CD8-positive, alpha-beta memory T cell (primary cell): ENCODE measurements at regions of chr1 and their contacts with region 1.

Region 1: DNA sequence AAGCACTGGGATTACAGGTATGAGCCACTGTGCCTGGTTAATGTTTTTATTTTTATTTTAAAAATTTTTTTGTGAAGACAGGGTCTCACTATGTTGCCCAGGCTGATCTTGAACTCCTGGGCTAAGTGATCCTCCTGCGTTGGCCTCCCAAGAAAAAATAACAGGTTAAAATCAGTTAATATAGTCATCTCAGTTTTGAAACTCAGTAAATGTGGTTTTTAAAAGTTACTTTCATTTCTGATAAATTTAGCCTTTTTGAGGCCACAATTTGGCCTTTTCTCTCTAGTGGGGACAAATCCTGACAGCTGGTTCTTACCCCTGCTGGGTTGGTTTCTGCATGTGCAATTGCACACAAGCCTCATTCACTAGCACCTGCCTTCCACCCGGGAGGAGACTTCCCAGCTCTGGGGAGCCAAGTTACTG is 13.3 kb downstream of the PMF1 start:
- DNase-seq: no peak
- H3K4me3 ChIP-seq: no peak overlapping the region
- H3K4me3 Mint-ChIP-seq: no peak overlapping the region
- H3K27ac ChIP-seq: no peak overlapping the region
- H3K27ac Mint-ChIP-seq: peak overlapping the region in 4 of 8 donors; percentile 14 to 78 (median 60)
- H3K4me1 ChIP-seq: no peaks in the 10 kb centered on the region
- H3K4me1 Mint-ChIP-seq: peaks cover 26 to 40% (median 31%) of the 10 kb centered on the region in 3 donors
- H3K27me3 ChIP-seq: no peaks in the 10 kb centered on the region
- H3K27me3 Mint-ChIP-seq: no peaks in the 10 kb centered on the region

Region 2: GRCh38 chr1:155622191-155622590 is 603.9 kb before region 1 on chr1:
- CTCF ChIA-PET with region 1: no interaction called
- POLR2A ChIA-PET with region 1: no interaction called
- DNase-seq: no peak
- H3K4me3 ChIP-seq: no peak overlapping the region
- H3K4me3 Mint-ChIP-seq: no peak overlapping the region
- H3K27ac ChIP-seq: no peak overlapping the region
- H3K27ac Mint-ChIP-seq: peak overlapping the region in 1 of 8 donors; percentile 14
- H3K4me1 ChIP-seq: no peaks in the 10 kb centered on the region
- H3K4me1 Mint-ChIP-seq: no peaks in the 10 kb centered on the region
- H3K27me3 ChIP-seq: no peaks in the 10 kb centered on the region
- H3K27me3 Mint-ChIP-seq: no peaks in the 10 kb centered on the region

Region 3: GRCh38 chr1:156096640-156097391 is 129.3 kb before region 1 on chr1:
- CTCF ChIA-PET with region 1: interaction called, 88 read pairs
- POLR2A ChIA-PET with region 1: no interaction called
- DNase-seq: peak; percentile 77 to 94 (median 87)
- H3K4me3 ChIP-seq: no peak overlapping the region
- H3K4me3 Mint-ChIP-seq: peak overlapping the region; percentile 23 to 91 (median 64)
- H3K27ac ChIP-seq: peak overlapping the region; percentile 68
- H3K27ac Mint-ChIP-seq: peak overlapping the region; percentile 93 to 100 (median 99)
- H3K4me1 ChIP-seq: peaks cover 22% of the 10 kb centered on the region
- H3K4me1 Mint-ChIP-seq: peaks cover 32 to 46% (median 37%) of the 10 kb centered on the region in 3 donors
- H3K27me3 ChIP-seq: no peaks in the 10 kb centered on the region
- H3K27me3 Mint-ChIP-seq: peaks cover 0 to 5% of the 10 kb centered on the region in 2 donors

Region 4: GRCh38 chr1:156129706-156130581 is 96.2 kb before region 1 on chr1:
- CTCF ChIA-PET with region 1: interaction called, 18 read pairs
- POLR2A ChIA-PET with region 1: no interaction called
- DNase-seq: peak; percentile 57 to 77 (median 71)
- H3K4me3 ChIP-seq: no peak overlapping the region
- H3K4me3 Mint-ChIP-seq: peak overlapping the region in 3 of 7 donors; percentile 48 to 72 (median 59)
- H3K27ac ChIP-seq: no peak overlapping the region
- H3K27ac Mint-ChIP-seq: peak overlapping the region in 7 of 8 donors; percentile 68 to 97 (median 90)
- H3K4me1 ChIP-seq: peaks cover 55% of the 10 kb centered on the region
- H3K4me1 Mint-ChIP-seq: peaks cover 42 to 54% (median 53%) of the 10 kb centered on the region in 3 donors
- H3K27me3 ChIP-seq: no peaks in the 10 kb centered on the region
- H3K27me3 Mint-ChIP-seq: peaks cover 0 to 3% of the 10 kb centered on the region in 2 donors

Region 5: DNA sequence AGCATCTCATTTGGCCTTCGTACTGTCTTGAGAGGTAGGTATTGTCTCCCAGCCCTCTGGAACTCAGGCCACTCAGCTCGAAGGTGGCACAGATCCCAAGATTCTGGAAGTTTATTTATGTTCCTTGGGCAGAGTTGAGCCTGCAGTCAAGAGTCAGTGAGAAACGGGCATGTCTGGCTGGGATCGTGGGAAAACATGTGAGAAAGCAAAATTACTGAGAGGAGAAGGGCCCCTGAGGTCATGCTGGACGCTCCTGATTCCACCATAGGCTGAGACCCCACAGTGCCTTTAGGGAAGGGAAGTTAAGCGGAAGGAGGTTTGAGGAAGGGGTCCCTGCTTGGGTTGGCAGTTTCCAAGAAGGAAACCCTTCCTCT is 85.3 kb before region 1 on chr1:
- CTCF ChIA-PET with region 1: interaction called, 50 read pairs
- POLR2A ChIA-PET with region 1: no interaction called
- DNase-seq: no peak
- H3K4me3 ChIP-seq: no peak overlapping the region
- H3K4me3 Mint-ChIP-seq: peak overlapping the region in 1 of 7 donors; percentile 59
- H3K27ac ChIP-seq: no peak overlapping the region
- H3K27ac Mint-ChIP-seq: peak overlapping the region in 3 of 8 donors; percentile 21 to 58 (median 53)
- H3K4me1 ChIP-seq: no peaks in the 10 kb centered on the region
- H3K4me1 Mint-ChIP-seq: peaks cover 1 to 4% (median 4%) of the 10 kb centered on the region in 3 donors
- H3K27me3 ChIP-seq: no peaks in the 10 kb centered on the region
- H3K27me3 Mint-ChIP-seq: no peaks in the 10 kb centered on the region

Region 6: GRCh38 chr1:156146020-156146768 is 79.9 kb before region 1 on chr1:
- CTCF ChIA-PET with region 1: interaction called, 50 read pairs
- POLR2A ChIA-PET with region 1: no interaction called
- DNase-seq: peak in 3 of 5 donors; percentile 56 to 70 (median 65)
- H3K4me3 ChIP-seq: peak overlapping the region; percentile 44
- H3K4me3 Mint-ChIP-seq: peak overlapping the region in 6 of 7 donors; percentile 0 to 77 (median 66)
- H3K27ac ChIP-seq: no peak overlapping the region
- H3K27ac Mint-ChIP-seq: peak overlapping the region in 6 of 8 donors; percentile 24 to 91 (median 80)
- H3K4me1 ChIP-seq: peaks cover 8% of the 10 kb centered on the region
- H3K4me1 Mint-ChIP-seq: peaks cover 14 to 20% (median 18%) of the 10 kb centered on the region in 3 donors
- H3K27me3 ChIP-seq: no peaks in the 10 kb centered on the region
- H3K27me3 Mint-ChIP-seq: peaks cover 0 to 9% of the 10 kb centered on the region in 2 donors

Region 7: GRCh38 chr1:156154317-156154749 is 71.8 kb before region 1 on chr1:
- CTCF ChIA-PET with region 1: interaction called, 13 read pairs
- POLR2A ChIA-PET with region 1: no interaction called
- DNase-seq: peak in 3 of 5 donors; percentile 39 to 59 (median 43)
- H3K4me3 ChIP-seq: no peak overlapping the region
- H3K4me3 Mint-ChIP-seq: peak overlapping the region; percentile 74 to 90 (median 78)
- H3K27ac ChIP-seq: no peak overlapping the region
- H3K27ac Mint-ChIP-seq: peak overlapping the region; percentile 37 to 94 (median 86)
- H3K4me1 ChIP-seq: no peaks in the 10 kb centered on the region
- H3K4me1 Mint-ChIP-seq: peaks cover 39 to 40% (median 40%) of the 10 kb centered on the region in 3 donors
- H3K27me3 ChIP-seq: no peaks in the 10 kb centered on the region
- H3K27me3 Mint-ChIP-seq: peaks cover 0 to 7% of the 10 kb centered on the region in 2 donors

Region 8: GRCh38 chr1:156212833-156213643 is 13.1 kb before region 1 on chr1 and contains the start of gene PMF1:
- CTCF ChIA-PET with region 1: interaction called, 27 read pairs
- POLR2A ChIA-PET with region 1: interaction called, 7 read pairs
- DNase-seq: peak; percentile 93 to 97 (median 94)
- H3K4me3 ChIP-seq: peak within 1 kb of the TSS; percentile 78
- H3K4me3 Mint-ChIP-seq: peak within 1 kb of the TSS; percentile 90 to 99 (median 97)
- H3K27ac ChIP-seq: peak within 1 kb of the TSS; percentile 93
- H3K27ac Mint-ChIP-seq: peak within 1 kb of the TSS; percentile 98 to 100 (median 99)
- H3K4me1 ChIP-seq: peaks cover 33% of the 10 kb centered on the region
- H3K4me1 Mint-ChIP-seq: peaks cover 31 to 47% (median 43%) of the 10 kb centered on the region in 3 donors
- H3K27me3 ChIP-seq: no peaks in the 10 kb centered on the region
- H3K27me3 Mint-ChIP-seq: no peaks in the 10 kb centered on the region
- total RNA-seq, gene PMF1: 85.9 to 88.3 TPM

Region 9: GRCh38 chr1:156262461-156263287 is 36.5 kb after region 1 on chr1:
- CTCF ChIA-PET with region 1: no interaction called
- POLR2A ChIA-PET with region 1: no interaction called
- DNase-seq: no peak
- H3K4me3 ChIP-seq: no peak overlapping the region
- H3K4me3 Mint-ChIP-seq: no peak overlapping the region
- H3K27ac ChIP-seq: no peak overlapping the region
- H3K27ac Mint-ChIP-seq: peak overlapping the region in 5 of 8 donors; percentile 12 to 42 (median 24)
- H3K4me1 ChIP-seq: no peaks in the 10 kb centered on the region
- H3K4me1 Mint-ChIP-seq: peaks cover 0 to 2% (median 0%) of the 10 kb centered on the region in 3 donors
- H3K27me3 ChIP-seq: no peaks in the 10 kb centered on the region
- H3K27me3 Mint-ChIP-seq: no peaks in the 10 kb centered on the region